Cardiac septum (tissue), 1 donor: ENCODE measurements at regions of chr4 and their contacts with region 1.

Region 1: DNA sequence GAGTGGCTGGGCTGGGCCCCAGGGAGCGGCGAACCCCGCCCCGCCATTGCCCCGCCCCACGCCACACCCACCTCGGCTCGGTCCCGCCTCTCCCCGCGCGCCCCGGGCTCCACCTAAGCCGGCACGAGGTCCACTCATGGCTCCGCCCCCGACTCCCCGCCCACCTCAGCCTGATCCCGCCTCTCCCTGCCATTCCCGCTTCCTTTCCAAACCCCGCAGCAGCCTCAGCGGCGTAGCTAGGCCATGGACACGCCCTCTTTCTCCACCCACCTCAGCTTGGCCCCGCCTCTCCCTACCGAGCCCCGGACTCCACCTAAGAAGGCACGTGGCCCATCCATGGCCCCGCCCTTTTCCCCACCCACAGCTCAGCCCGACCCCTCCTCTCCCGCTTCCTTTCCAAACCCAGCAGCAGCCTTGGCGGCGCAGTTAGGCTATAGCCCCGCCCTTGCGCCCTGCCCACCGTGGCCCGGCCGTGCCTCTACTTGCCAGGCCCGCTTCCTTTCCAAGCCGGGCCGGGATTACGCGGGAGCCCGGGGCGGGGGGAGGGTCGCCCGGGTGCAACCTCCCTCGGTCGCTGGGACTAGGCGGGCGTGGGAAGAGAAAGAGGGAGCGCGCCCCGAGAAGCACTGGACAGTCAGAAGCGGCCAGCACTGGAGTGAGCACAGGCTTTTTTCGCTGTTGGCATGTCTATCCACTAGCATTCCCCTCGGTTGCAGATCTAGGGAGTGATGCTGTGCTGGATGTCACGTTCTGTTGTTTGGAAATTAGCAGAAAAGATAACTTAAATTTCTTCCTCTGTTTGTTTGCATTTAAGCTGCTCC is at the start of gene RELL1:
- DNase-seq: peak; percentile 100
- total RNA-seq, gene RELL1: 40.6 TPM

Region 2: DNA sequence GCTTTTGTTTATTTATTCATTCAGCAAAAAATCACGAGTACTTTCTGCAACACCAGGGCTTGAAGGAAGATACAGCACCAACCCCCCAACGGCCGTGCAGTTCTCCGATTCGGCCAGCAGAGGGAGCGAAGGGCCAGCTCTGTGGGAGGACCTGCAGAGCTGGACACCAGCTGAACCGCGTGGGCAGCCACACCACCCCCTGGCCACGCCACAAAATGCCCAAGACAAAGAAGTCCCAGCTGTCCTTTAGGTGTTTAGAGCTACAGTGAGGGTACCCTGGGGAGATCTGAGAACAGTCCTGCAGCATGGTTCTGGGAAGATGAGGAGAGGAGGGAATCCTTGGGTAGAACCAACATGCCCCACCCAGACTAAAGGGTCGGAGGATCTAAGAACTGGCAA is 83.5 kb before region 1 on chr4:
- intact Hi-C with region 1: loop called (anchors 5 kb)
- DNase-seq: peak; percentile 93

Region 3: GRCh38 chr4:37648096-37648817 is 38.3 kb before region 1 on chr4:
- intact Hi-C with region 1: loop called (anchors 5 kb)
- DNase-seq: peak; percentile 84

Region 4: DNA sequence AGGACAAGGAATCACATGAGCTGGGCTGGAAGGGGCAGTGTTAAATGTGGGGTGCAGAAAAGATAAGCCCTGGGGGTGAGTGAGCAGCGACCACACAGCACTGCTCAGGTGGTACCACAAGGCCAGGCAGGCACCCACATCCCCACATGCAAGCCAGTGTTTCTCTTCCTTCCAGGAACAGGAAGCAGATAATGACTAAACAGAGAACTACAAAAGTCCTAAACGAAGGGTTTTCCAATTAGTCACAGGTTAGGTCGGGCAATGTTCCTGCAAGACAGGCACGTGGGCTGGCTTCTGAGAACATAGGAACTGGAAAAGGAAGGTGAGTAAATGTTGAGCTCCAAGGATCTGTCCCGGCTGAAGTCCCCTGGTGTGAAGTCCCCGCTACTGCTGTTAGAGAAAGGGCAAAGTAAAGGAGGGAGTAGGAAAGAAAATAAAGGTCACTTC is 19.9 kb before region 1 on chr4:
- intact Hi-C with region 1: loop called (anchors 1 kb)
- DNase-seq: peak; percentile 80

Region 5: DNA sequence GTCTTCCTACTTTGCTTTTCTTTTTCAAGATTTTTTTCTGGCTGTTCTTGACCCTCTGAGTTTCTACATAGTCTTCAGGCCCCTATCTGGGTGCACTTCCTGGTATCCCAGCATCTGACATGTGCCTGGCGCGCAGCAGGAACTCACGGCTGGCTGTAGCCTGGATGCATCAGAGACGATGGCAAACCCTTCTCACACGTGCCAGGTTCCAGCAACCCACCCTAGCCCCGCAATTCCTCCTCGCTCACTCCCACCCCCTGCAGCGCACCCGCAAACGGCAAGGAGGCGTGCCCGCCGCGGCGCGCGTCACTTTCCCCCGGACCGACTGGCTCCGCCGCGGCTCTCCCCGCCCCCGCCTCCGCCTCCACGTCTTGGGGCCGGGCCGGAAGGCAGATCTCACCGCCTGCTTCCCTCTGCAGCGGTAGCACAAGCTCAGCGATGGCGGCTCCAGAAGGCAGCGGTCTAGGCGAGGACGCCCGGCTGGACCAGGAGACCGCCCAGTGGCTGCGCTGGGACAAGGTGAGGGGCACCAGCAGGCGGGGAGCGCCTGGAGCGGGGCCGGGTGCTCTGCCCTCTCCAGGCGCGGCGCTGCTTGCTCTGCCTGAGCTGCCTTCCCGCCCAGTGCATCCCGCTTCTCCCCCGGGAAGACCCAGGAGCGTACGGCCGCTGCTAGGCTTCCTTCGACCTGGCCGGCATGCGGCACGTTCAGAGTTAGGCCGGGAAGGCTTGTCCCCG is 139.9 kb after region 1 on chr4 and contains the start of gene PGM2:
- intact Hi-C with region 1: loop called (anchors 2 kb)
- DNase-seq: peak; percentile 97
- total RNA-seq, gene PGM2: 9.5 TPM

Region 6: GRCh38 chr4:37977471-37978247 is 291.1 kb after region 1 on chr4:
- intact Hi-C with region 1: loop called (anchors 5 kb)
- DNase-seq: peak; percentile 90

Region 7: GRCh38 chr4:38034986-38035882 is 348.7 kb after region 1 on chr4:
- intact Hi-C with region 1: loop called (anchors 10 kb)
- DNase-seq: no peak